Left cardiac atrium (tissue), 4 donors: ENCODE measurements at regions of chr16 and their contacts with region 1.

Region 1: GRCh38 chr16:70679666-70680494 is 6.0 kb downstream of the MTSS2 start:
- DNase-seq: peak; percentile 39
- ATAC-seq: peak; percentile 39 to 53

Region 2: DNA sequence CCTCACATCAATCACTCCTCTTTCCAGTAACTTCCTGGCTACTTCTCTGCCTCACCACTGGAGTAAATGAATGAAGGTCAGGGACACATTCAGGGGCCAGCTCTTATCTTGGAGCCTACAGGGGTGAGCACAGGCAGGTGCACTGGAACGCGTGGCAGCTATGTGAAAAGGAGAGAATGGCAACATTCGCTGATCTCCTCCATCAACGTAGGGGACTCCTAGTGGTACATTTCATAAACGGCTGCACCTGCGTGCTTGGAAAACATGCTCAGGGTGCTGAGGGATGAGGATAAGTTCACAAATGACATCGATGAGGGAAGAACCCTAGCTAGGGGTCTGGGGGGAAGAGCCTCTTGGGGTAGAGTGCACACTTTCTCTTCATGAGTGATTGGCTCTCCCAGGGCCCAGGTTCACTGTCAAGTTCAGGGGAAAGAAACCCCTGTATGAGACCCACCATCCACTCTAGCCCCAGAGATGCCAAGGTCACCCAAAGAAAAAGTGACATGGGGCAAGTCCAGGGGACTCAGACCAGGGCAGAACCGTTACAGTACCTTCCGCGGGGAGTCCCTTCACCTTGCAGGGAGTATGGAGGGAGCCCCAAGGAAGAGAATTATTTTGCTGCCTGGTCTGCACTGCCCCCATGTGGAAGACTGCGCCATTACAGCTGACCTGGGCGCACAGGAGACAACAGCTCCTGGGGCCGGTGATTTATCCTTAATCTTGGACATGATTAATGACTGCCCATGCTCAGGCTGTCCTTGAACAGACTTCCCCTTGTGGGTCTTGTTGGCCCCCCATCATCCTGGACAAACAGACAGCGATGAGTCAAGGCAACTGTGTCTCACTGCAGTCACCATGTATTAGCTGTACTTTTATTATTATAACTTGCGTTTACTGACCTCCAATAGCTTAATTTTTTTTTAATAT is 91.0 kb after region 1 on chr16:
- intact Hi-C with region 1: loop called (anchors 5 kb)
- DNase-seq: no peak
- ATAC-seq: peak; percentile 71 to 75